Mammary epithelial cell (primary cell): ENCODE measurements at regions of chr2 and their contacts with region 1.

Region 1: GRCh38 chr2:134564549-134564948 is 154.3 kb downstream of the TMEM163 start:
- DNase-seq: no peak
- H3K4me3 ChIP-seq: no peak overlapping the region
- H3K27ac ChIP-seq: no peak overlapping the region
- H3K4me1 ChIP-seq: no peaks in the 10 kb centered on the region
- H3K27me3 ChIP-seq: no peaks in the 10 kb centered on the region
- CTCF ChIP-seq: no peak

Region 2: GRCh38 chr2:133122529-133122928 is 1442.0 kb before region 1 on chr2:
- CTCF ChIA-PET with region 1: no interaction called
- dilution Hi-C with region 1: no loop called
- in situ Hi-C with region 1: no loop called
- intact Hi-C with region 1: no loop called
- DNase-seq: no peak
- H3K4me3 ChIP-seq: no peak overlapping the region
- H3K27ac ChIP-seq: no peak overlapping the region
- H3K4me1 ChIP-seq: no peaks in the 10 kb centered on the region
- H3K27me3 ChIP-seq: no peaks in the 10 kb centered on the region
- CTCF ChIP-seq: no peak

Region 3: GRCh38 chr2:134527381-134527780 is 37.2 kb before region 1 on chr2:
- CTCF ChIA-PET with region 1: no interaction called
- dilution Hi-C with region 1: loop called (anchors 5 kb)
- in situ Hi-C with region 1: no loop called
- intact Hi-C with region 1: no loop called
- DNase-seq: no peak
- H3K4me3 ChIP-seq: no peak overlapping the region
- H3K27ac ChIP-seq: no peak overlapping the region
- H3K4me1 ChIP-seq: no peaks in the 10 kb centered on the region
- H3K27me3 ChIP-seq: no peaks in the 10 kb centered on the region
- CTCF ChIP-seq: no peak